Activated B cell treated with CpG ODN at 0.5 μM for 24 hours (primary cell): ENCODE measurements at regions of chr22 and their contacts with region 1.

Region 1: GRCh38 chr22:29766632-29767170 is at the start of gene ZMAT5:
- DNase-seq: peak; percentile 76
- ATAC-seq: peak; percentile 96
- H3K4me3 Mint-ChIP-seq: peak within 1 kb of the TSS; percentile 97
- H3K27ac Mint-ChIP-seq: peak within 1 kb of the TSS; percentile 93
- H3K4me1 Mint-ChIP-seq: peaks cover 32% of the 10 kb centered on the region
- H3K27me3 Mint-ChIP-seq: no peaks in the 10 kb centered on the region
- CTCF ChIP-seq: no peak
- total RNA-seq, gene ZMAT5: 19.2 and 22.6 TPM in 2 replicates

Region 2: DNA sequence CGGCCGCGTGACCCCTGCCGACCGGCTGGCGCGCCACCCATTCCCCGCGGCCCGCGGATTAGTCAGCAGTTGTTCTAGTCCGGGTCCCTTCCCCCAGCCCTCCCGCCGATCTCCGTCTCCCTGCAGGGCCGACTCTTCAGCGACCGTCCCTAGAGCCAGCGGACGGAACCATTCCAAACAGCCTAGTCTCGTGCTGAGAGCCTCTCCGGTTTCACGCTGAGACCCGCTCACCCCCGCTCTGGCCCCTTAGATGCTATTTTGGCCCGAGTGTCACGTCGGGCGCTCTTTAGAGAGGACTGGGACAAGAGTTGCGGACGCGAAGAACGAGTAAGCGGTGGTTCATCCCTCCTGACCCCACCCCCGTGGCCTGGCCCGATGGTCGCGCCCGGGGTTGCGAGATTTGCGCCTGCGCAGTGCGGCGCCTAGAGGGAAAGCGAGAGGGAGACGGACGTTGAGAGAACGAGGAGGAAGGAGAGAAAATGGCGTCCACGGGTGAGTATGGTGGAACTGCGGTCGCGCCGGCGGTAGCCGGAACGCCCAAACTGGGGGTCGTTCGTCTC is 498.8 kb before region 1 on chr22 and contains the starts of genes EWSR1 and RHBDD3:
- CTCF ChIA-PET with region 1: no interaction called
- POLR2A ChIA-PET with region 1: no interaction called
- intact Hi-C with region 1: loop called (anchors 5 kb)
- DNase-seq: peak; percentile 99
- ATAC-seq: peak; percentile 86
- H3K4me3 Mint-ChIP-seq: peak within 1 kb of the TSS; percentile 96
- H3K27ac Mint-ChIP-seq: peak within 1 kb of the TSS; percentile 100
- H3K4me1 Mint-ChIP-seq: peaks cover 58% of the 10 kb centered on the region
- H3K27me3 Mint-ChIP-seq: no peaks in the 10 kb centered on the region
- CTCF ChIP-seq: no peak
- total RNA-seq, gene EWSR1: 347 and 382 TPM in 2 replicates
- total RNA-seq, gene RHBDD3: 17.7 and 17.9 TPM in 2 replicates

Region 3: DNA sequence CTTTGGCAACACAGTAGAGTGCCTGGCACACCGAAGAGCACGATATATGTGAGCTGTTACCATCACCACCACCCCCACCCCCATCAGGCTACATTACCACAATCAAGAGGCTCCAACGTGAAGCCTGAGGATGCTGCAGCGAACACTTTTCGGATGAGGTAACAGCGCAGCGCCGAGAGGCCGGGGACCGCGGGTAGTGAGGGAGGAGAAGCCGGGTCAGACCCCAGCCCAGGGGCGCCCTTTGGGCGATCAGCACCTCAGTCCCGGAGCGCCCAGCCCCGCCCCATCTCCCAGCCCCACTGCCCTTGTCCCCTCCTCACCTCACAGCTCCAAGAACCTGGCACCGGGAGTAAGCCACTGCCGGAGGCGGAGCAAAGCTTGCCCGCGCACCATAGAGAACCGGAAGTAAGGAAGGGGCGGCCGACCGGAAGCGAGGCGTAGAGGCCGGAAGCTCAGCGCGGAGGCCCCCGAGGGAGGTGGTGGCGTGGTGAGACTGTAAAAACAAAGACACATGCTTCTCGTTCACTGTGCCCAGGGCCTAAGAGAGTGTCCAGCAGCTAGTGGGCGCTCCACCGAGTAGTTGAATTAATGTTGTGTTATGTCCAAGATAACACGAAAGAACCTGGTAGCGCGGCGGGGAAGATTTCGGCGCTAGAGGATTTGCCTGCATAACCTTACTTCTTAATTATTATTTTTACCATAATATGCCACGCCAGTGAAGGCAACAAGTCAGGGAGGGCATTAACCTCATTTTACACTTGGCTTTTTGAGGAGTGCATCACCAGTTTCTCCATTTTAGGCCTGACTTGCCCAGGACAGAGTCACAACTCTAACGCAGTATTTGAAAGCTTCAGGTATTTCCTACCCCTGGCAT is 213.1 kb before region 1 on chr22 and contains the start of gene THOC5:
- CTCF ChIA-PET with region 1: no interaction called
- POLR2A ChIA-PET with region 1: interaction called, 5 read pairs
- intact Hi-C with region 1: loop called (anchors 2 kb)
- DNase-seq: peak; percentile 84
- ATAC-seq: peak; percentile 96
- H3K4me3 Mint-ChIP-seq: peak within 1 kb of the TSS; percentile 96
- H3K27ac Mint-ChIP-seq: peak within 1 kb of the TSS; percentile 98
- H3K4me1 Mint-ChIP-seq: peaks cover 16% of the 10 kb centered on the region
- H3K27me3 Mint-ChIP-seq: no peaks in the 10 kb centered on the region
- CTCF ChIP-seq: no peak
- total RNA-seq, gene THOC5: 44.1 and 51.3 TPM in 2 replicates

Region 4: DNA sequence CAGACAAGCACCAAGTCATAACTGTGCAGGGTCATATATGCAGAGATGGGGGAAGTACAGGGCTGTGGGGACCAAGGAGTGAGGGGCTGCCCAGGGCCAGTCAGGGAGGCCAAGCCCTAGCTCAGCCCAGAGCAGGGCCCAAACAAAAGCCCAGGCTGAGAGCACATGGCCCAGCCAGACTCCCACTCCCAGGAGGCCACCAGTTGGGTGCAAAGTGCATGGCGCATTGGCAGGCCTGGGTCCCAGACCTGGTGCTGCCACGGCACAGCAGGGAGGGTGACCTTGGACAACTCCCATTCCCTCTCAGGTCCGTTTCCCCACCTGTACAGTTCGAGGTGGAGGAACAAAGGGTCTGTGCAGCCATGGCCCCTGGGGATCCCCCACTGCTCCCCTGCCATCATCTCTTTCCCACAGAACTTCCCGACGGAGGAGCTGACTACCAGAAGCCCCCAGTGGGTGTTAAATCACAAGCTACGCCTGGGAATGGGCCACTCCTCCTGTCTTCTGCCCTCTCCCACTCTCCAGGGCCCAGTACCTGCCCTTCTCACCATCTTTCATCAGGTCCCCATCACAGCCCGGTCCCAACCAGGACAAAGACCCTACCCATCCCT is 186.4 kb before region 1 on chr22:
- CTCF ChIA-PET with region 1: no interaction called
- POLR2A ChIA-PET with region 1: no interaction called
- intact Hi-C with region 1: loop called (anchors 1 kb)
- DNase-seq: no peak
- ATAC-seq: no peak
- H3K4me3 Mint-ChIP-seq: peak overlapping the region; percentile 92
- H3K27ac Mint-ChIP-seq: peak overlapping the region; percentile 86
- H3K4me1 Mint-ChIP-seq: peaks cover 18% of the 10 kb centered on the region
- H3K27me3 Mint-ChIP-seq: no peaks in the 10 kb centered on the region
- CTCF ChIP-seq: no peak

Region 5: GRCh38 chr22:29837780-29838598 is 71.3 kb after region 1 on chr22 and contains the start of gene ASCC2:
- CTCF ChIA-PET with region 1: no interaction called
- POLR2A ChIA-PET with region 1: interaction called, 5 read pairs
- intact Hi-C with region 1: loop called (anchors 1 kb)
- DNase-seq: peak; percentile 97
- ATAC-seq: peak; percentile 99
- H3K4me3 Mint-ChIP-seq: peak within 1 kb of the TSS; percentile 97
- H3K27ac Mint-ChIP-seq: peak within 1 kb of the TSS; percentile 96
- H3K4me1 Mint-ChIP-seq: peaks cover 37% of the 10 kb centered on the region
- H3K27me3 Mint-ChIP-seq: no peaks in the 10 kb centered on the region
- CTCF ChIP-seq: no peak
- total RNA-seq, gene ASCC2: 88.1 and 89.7 TPM in 2 replicates

Region 6: DNA sequence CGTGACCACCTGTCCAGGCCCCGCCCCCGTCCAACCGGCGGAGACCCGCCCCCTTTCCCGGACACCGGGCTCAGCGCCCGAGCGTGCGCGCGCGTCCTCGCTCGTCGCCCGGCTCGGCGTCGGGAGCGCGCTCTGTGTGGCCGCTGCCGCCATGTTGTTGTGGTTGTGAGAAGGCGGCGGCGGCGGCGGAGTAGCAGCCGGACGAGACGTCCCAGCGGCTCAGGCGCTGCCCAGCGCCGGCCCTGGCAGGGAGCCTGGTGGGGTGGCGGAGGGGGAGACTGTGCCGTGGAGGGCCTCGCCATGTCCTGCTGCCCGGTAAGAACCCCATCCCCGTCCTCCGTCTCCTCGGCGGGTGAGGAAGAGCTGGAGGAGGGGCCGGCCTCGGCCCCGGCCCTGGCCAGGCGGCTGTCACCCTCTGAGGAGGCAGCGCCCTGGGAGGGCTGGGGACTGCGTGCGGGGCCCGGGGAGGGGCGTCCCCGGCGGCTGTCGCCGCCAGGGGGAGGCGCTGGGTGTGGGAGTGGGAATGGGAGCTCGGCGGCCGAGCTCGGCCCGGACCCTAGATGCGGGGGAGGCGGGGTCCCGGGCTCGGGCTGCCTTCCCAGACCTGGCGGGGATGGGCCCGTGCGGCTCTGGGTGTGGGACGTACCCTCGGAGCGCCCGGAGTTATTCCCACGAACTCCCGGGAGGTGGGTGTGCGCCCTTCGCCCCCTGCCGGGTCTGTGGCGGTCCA is 116.5 kb after region 1 on chr22 and contains the start of gene MTMR3:
- CTCF ChIA-PET with region 1: no interaction called
- POLR2A ChIA-PET with region 1: interaction called, 5 read pairs
- intact Hi-C with region 1: loop called (anchors 1 kb)
- DNase-seq: peak; percentile 98
- ATAC-seq: peak; percentile 82
- H3K4me3 Mint-ChIP-seq: peak within 1 kb of the TSS; percentile 92
- H3K27ac Mint-ChIP-seq: peak within 1 kb of the TSS; percentile 83
- H3K4me1 Mint-ChIP-seq: peaks cover 10% of the 10 kb centered on the region
- H3K27me3 Mint-ChIP-seq: peaks cover 3% of the 10 kb centered on the region
- CTCF ChIP-seq: no peak
- total RNA-seq, gene MTMR3: 34.8 and 36.6 TPM in 2 replicates